H1 (cell line): ENCODE measurements at regions of chr10 and their contacts with region 1.

Region 1: GRCh38 chr10:16527452-16527851 is 5.8 kb upstream of the C1QL3 start:
- DNase-seq: no peak
- H3K4me3 ChIP-seq: no peak overlapping the region
- H3K27ac ChIP-seq: no peak overlapping the region
- H3K4me1 ChIP-seq: peaks cover 0 to 7% (median 5%) of the 10 kb centered on the region in 4 experiments; a peak in 6 of 7 replicates
- H3K27me3 ChIP-seq: peaks cover 5 to 18% (median 9%) of the 10 kb centered on the region in 4 experiments
- CTCF ChIP-seq: no peak
- EP300 ChIP-seq: no peak
- POLR2A ChIP-seq: no peak
- RAD21 ChIP-seq: no peak

Region 2: DNA sequence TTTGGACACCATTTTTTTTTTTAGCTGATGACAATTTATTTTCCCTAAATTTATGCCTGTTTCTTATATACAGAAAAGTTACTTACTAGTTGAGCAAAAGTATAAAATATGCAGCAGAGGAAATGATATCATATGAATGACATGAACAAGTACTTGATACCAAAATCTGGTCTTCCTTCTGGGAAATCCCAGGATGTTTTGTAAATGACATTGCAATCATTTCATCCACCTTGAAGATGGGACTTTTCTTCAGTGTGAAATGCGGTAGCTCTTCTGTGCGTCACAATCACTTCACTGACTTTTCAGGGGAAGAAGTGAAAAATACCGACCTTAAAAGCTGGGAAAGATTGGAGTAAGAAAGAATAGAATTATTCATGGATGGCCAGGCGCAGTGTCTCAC is 29.5 kb before region 1 on chr10:
- CTCF ChIA-PET with region 1: no interaction called
- POLR2A ChIA-PET with region 1: no interaction called
- DNase-seq: no peak
- H3K4me3 ChIP-seq: no peak overlapping the region
- H3K27ac ChIP-seq: no peak overlapping the region
- H3K4me1 ChIP-seq: no peaks in the 10 kb centered on the region
- H3K27me3 ChIP-seq: no peaks in the 10 kb centered on the region
- CTCF ChIP-seq: no peak
- EP300 ChIP-seq: no peak
- POLR2A ChIP-seq: no peak
- RAD21 ChIP-seq: no peak

Region 3: DNA sequence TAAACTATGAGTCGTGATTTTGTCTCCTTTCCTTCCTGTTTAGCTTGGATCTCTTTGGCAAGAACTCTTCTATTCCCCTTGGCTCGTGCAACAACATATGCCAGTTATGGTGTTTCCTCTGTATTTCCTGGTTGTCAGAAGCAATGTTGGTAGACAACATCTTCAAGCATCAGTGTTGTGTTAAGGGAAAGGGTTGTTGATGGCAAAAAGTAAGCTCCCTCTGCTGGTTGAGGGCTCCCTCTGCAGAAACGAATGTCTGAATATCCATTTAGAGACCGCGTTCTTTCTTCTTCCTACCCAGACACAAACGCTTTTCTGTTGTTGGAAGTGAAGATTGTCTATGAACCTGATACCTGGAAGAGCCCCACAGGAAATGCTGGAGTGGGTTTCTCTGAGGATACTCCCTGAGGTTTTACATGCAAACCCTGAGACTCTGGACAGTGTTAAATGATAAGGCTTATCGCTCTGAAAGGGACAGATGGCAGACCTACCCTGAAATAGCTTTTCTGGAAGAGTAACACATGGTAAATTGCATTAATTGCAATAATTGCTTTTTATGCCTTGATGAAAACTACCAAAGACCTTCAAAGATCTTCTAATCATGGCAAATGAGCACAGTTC is 17.8 kb after region 1 on chr10:
- CTCF ChIA-PET with region 1: interaction called, 28 read pairs
- POLR2A ChIA-PET with region 1: no interaction called
- DNase-seq: no peak
- H3K4me3 ChIP-seq: no peak overlapping the region
- H3K27ac ChIP-seq: no peak overlapping the region
- H3K4me1 ChIP-seq: no peaks in the 10 kb centered on the region
- H3K27me3 ChIP-seq: no peaks in the 10 kb centered on the region
- CTCF ChIP-seq: peak in 2 of 3 experiments; percentile 73 to 94; a peak in 3 of 4 replicates
- EP300 ChIP-seq: no peak
- POLR2A ChIP-seq: no peak
- RAD21 ChIP-seq: peak; percentile 78 to 79